CD8-positive, alpha-beta T cell (primary cell): ENCODE measurements at regions of chr16 and their contacts with region 1.

Region 1: DNA sequence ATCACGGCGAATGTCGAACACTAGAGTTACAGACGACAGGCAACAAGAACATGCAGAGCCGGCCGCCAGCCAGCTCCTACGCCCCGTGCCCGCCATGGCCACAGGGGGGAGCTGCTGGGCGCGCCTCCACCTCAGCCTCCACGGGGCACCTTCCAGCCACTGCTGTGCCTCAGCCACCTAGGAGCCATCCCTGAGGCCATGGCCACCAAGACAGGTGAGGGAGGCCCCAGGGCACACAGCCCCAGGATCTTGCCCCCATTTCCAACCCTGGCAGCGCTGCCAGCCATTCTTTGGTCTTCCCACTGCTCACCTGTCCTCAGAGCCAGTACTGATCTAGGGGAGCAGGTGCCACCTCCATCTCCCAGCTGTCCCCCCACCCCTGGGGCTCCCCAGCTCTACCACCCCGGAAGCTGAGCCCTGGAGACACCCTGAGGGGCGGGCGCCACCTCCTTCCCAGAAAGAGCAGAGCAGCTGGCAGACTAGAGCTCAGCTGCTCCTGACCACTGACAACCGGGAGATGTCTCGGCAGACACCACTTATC is 11.8 kb downstream of the GNPTG start:
- DNase-seq: peak; percentile 49 to 82 (median 71)
- ATAC-seq: peak; percentile 98
- H3K4me3 ChIP-seq: no peak overlapping the region
- H3K4me3 Mint-ChIP-seq: no peak overlapping the region
- H3K27ac ChIP-seq: no peak overlapping the region
- H3K27ac Mint-ChIP-seq: peak overlapping the region; percentile 37
- H3K4me1 ChIP-seq: no peaks in the 10 kb centered on the region
- H3K4me1 Mint-ChIP-seq: peaks cover 3% of the 10 kb centered on the region
- H3K27me3 ChIP-seq: no peaks in the 10 kb centered on the region
- H3K27me3 Mint-ChIP-seq: no peaks in the 10 kb centered on the region
- CTCF ChIP-seq: peak; percentile 87

Region 2: DNA sequence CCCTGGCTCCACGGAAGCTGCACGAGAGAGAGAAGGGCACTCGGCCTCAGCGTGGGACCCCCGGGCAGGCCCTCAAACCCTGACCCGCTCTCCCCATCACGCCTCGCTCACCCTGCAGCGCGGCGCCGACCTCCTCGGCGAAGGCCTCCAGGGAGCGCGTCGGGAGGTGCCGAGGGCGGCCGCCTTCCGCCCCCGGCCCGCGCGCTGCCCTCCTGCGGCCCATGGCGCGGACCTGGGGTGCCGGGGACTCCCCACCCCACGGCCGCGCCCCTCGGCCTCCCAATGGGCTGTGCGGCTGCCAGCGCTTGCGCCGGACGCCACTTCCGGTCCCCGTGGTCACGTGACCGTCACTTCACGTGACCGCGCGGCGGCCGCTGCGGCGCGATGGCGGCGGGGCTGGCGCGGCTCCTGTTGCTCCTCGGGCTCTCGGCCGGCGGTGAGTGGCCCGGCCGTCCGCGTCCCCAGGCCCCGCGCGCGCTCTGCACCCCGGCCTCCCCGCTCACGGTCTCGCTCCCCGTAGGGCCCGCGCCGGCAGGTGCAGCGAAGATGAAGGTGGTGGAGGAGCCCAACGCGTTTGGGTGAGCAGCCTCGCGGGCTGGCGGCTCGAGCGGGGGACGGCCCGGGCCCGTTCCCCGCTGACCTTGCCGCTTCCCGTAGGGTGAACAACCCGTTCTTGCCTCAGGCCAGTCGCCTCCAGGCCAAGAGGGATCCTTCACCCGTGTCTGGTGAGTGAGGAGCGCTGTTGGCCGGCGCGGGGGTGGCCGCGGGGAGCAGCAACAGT is 11.8 kb before region 1 on chr16 and contains the starts of genes GNPTG and TSR3:
- CTCF ChIA-PET with region 1: interaction called, 13 read pairs
- POLR2A ChIA-PET with region 1: interaction called, 3 read pairs
- intact Hi-C with region 1: no loop called
- DNase-seq: peak; percentile 68 to 95 (median 82)
- ATAC-seq: peak; percentile 87
- H3K4me3 ChIP-seq: peak within 1 kb of the TSS; percentile 76 to 84
- H3K4me3 Mint-ChIP-seq: peak within 1 kb of the TSS; percentile 82
- H3K27ac ChIP-seq: peak within 1 kb of the TSS; percentile 39 to 50
- H3K27ac Mint-ChIP-seq: peak within 1 kb of the TSS; percentile 72
- H3K4me1 ChIP-seq: peaks cover 24% of the 10 kb centered on the region
- H3K4me1 Mint-ChIP-seq: peaks cover 35% of the 10 kb centered on the region
- H3K27me3 ChIP-seq: no peaks in the 10 kb centered on the region
- H3K27me3 Mint-ChIP-seq: no peaks in the 10 kb centered on the region
- CTCF ChIP-seq: no peak
- total RNA-seq, gene GNPTG: 30.7 to 31.9 TPM
- total RNA-seq, gene TSR3: 21.6 to 22.7 TPM

Region 3: GRCh38 chr16:1378804-1379303 is 15.3 kb after region 1 on chr16:
- CTCF ChIA-PET with region 1: interaction called, 13 read pairs
- POLR2A ChIA-PET with region 1: interaction called, 3 read pairs
- intact Hi-C with region 1: no loop called
- DNase-seq: peak in 6 of 9 experiments; percentile 19 to 85 (median 56)
- ATAC-seq: peak; percentile 59
- H3K4me3 ChIP-seq: no peak overlapping the region
- H3K4me3 Mint-ChIP-seq: peak overlapping the region; percentile 58
- H3K27ac ChIP-seq: no peak overlapping the region
- H3K27ac Mint-ChIP-seq: peak overlapping the region; percentile 64
- H3K4me1 ChIP-seq: peaks cover 17% of the 10 kb centered on the region
- H3K4me1 Mint-ChIP-seq: peaks cover 14% of the 10 kb centered on the region
- H3K27me3 ChIP-seq: no peaks in the 10 kb centered on the region
- H3K27me3 Mint-ChIP-seq: no peaks in the 10 kb centered on the region
- CTCF ChIP-seq: no peak

Region 4: GRCh38 chr16:1543085-1543896 is 179.7 kb after region 1 on chr16:
- CTCF ChIA-PET with region 1: no interaction called
- POLR2A ChIA-PET with region 1: no interaction called
- intact Hi-C with region 1: loop called (anchors 1 to 2 kb)
- DNase-seq: peak in 5 of 9 experiments; percentile 42 to 65 (median 48)
- ATAC-seq: peak; percentile 68
- H3K4me3 ChIP-seq: no peak overlapping the region
- H3K4me3 Mint-ChIP-seq: peak overlapping the region; percentile 44
- H3K27ac ChIP-seq: peak overlapping the region; percentile 4 to 44
- H3K27ac Mint-ChIP-seq: peak overlapping the region; percentile 76
- H3K4me1 ChIP-seq: peaks cover 93% of the 10 kb centered on the region
- H3K4me1 Mint-ChIP-seq: peaks cover 71% of the 10 kb centered on the region
- H3K27me3 ChIP-seq: no peaks in the 10 kb centered on the region
- H3K27me3 Mint-ChIP-seq: no peaks in the 10 kb centered on the region
- CTCF ChIP-seq: no peak